ENCODE measurements at regions of chr4 and their contacts with region 1.

Region 1: DNA sequence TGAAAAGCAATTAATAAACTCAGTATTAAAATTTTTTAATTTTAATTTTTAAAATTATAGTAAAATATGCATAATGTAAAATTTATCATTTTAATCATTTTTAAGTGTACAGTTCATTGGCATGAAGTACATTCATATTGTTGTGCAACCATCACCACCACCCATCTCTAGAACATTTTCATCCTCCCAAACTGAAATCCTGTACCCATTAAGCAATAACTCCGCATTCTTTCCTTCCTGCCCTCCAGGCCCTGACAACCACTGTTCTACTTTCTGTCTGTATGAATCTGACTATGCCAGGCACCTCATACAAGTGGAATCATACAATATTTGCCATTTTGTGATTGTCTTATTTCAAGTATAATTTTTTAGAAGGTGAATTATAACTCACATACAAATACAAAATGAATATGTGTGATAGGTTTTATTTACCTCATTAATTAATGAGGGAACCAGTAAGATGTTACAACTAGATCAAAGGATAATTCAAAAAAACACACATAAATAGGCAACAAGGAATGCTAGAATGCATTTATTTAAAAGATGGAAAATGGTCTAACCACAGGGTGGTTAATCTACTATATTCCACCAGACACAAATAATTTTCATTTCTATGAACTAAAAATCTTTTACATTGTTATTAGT is 13.1 kb upstream of the AFF1 start:
- DNase-seq: no peak
- ATAC-seq: no peak
- H3K4me3 Mint-ChIP-seq: no peak overlapping the region
- H3K27ac Mint-ChIP-seq: no peak overlapping the region
- H3K4me1 Mint-ChIP-seq: peaks cover 5% of the 10 kb centered on the region
- H3K27me3 Mint-ChIP-seq: no peaks in the 10 kb centered on the region

Region 2: DNA sequence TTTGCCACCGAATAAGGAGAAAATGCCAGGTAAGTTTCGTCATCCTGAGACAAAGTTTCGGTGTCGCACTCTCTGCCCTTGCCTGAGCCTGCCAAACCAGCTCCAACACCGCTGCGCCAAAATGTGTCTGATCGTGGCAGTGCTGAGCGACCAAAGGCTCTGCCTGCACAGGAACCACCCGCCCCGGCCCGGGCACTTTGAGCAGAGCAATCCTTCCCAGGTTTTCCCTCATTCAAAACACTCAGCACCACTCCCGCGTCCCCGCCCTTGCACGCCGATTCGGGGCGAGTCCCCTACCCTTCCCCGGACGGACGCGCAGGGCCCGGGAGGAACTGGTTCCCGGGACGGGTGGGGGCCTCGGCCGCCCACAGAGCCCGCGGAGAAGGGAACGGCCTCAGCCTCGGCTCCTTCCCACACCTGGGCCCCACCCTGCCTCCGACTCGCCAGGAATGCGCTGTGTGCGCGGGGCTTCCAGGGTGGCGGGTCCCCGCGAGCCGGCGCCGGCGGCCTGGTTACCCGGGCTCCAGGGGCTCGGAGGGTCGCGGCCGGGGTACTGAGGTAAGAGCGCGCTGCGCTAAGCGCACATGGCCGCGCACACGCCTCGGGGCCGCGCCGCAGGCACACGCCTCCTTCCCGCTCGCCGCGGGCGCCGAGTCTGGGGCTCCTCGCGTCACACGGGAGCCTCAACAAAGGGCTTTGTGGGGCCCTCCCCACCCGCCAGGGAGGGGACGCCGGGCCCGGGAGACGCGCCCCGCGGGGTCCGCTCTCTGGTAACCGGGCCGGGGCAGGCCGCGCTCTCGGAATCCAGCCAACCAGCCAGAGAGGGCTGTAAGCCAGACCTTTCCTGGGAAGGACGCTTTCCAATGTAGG is 29.7 kb before region 1 on chr4 and contains the start of gene C4orf36:
- CTCF ChIA-PET with region 1: no interaction called
- POLR2A ChIA-PET with region 1: no interaction called
- DNase-seq: peak; percentile 38
- ATAC-seq: peak; percentile 76
- H3K4me3 Mint-ChIP-seq: peak within 1 kb of the TSS; percentile 72
- H3K27ac Mint-ChIP-seq: no peak within 1 kb of the TSS
- H3K4me1 Mint-ChIP-seq: peaks cover 3% of the 10 kb centered on the region
- H3K27me3 Mint-ChIP-seq: peaks cover 21% of the 10 kb centered on the region
- total RNA-seq, gene C4orf36: 0.37 TPM in 1 of 2 experiments, not detected in the other

Region 3: DNA sequence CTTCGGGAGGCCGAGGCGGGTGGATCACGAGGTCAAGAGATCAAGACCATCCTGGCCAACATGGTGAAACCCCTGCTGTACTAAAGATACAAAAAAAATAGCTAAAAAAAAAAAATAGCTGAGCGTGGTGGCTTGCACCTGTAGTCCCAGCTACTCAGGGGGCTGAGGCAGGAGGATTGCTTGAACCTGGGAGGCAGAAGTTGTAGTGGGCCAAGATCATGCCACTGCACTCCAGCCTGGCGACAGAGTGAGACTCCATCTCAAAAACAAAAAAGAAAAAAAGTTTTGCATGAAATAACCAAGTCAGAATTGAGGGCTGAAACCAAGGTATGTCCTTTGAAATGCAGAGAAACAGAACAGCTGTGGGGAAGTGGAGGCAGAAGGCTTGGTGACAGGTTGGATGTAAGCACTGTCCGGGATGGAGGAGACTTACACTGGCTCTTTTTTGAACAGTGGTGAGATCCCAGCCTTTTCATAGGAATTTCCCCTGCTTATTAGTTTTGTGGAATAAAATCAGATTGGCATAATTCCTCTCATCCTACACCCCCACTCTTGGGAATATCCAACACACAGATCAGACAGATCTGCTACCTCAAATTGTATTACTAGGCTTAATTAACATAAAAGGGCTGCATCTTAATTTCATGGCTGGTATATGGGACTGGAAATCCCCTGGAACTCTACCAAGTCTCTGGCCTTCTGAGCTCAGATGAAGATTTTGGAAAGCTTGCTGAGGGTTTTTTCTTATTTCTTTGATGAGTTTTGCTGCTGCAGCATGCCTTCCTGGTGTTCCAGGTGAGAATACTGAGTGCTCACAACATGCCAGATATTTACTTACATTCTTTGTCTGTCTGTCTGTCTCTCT is 10.7 kb before region 1 on chr4:
- CTCF ChIA-PET with region 1: interaction called, 15 read pairs
- POLR2A ChIA-PET with region 1: no interaction called
- DNase-seq: no peak
- ATAC-seq: no peak
- H3K4me3 Mint-ChIP-seq: no peak overlapping the region
- H3K27ac Mint-ChIP-seq: no peak overlapping the region
- H3K4me1 Mint-ChIP-seq: peaks cover 13% of the 10 kb centered on the region
- H3K27me3 Mint-ChIP-seq: no peaks in the 10 kb centered on the region

Region 4: GRCh38 chr4:86934771-86935565 is 13.2 kb after region 1 on chr4 and contains the start of gene AFF1:
- CTCF ChIA-PET with region 1: interaction called, 53 read pairs
- POLR2A ChIA-PET with region 1: interaction called, 5 read pairs
- DNase-seq: peak; percentile 92
- ATAC-seq: peak; percentile 76
- H3K4me3 Mint-ChIP-seq: peak within 1 kb of the TSS; percentile 88
- H3K27ac Mint-ChIP-seq: peak within 1 kb of the TSS; percentile 92
- H3K4me1 Mint-ChIP-seq: peaks cover 47% of the 10 kb centered on the region
- H3K27me3 Mint-ChIP-seq: no peaks in the 10 kb centered on the region
- total RNA-seq, gene AFF1: 47.8 to 51.6 TPM

Region 5: DNA sequence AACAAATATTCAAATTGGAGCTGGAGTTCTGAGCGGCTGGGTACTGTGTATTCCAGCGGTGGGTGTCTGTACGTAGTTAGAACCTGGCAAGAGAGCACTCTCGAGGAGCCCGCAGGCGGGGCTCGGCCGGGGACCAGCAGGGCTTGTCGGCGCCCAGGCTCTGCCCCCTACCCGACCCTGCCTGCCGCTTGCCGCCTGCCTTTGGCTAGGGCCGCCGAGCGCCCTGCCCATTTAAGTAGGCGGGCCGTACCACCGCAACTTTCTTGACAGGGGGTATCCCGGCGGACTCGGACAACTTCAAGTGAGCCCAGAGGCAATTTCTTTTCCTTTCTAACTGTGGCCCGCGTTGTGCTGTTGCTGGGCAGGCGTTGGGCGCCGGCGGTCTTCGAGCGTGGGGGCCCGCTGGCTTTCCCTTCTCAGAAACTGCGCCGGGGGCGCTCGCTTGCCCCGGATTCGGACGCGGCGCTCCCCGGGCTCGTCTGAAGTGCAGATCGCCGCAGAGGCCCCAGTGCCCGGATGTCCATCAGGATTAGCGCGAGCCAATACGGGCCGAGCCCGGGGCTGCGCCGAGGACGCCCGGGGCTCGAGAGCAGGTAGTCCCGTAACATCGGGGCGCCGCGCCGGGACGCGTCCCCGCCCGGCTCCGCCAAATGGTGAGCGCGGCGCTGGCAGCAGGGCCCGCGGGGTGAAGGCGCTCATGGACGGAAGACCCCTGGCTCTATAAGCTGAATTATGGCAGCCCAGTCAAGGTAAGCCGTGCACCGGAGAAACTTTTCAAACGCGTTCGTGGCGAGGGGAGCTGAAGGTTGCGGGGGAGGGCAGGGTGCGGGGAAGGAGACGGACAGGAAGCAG is 85.2 kb after region 1 on chr4:
- CTCF ChIA-PET with region 1: interaction called, 35 read pairs
- POLR2A ChIA-PET with region 1: interaction called, 11 read pairs
- DNase-seq: peak; percentile 92
- ATAC-seq: peak; percentile 87
- H3K4me3 Mint-ChIP-seq: peak overlapping the region; percentile 98
- H3K27ac Mint-ChIP-seq: peak overlapping the region; percentile 98
- H3K4me1 Mint-ChIP-seq: peaks cover 50% of the 10 kb centered on the region
- H3K27me3 Mint-ChIP-seq: no peaks in the 10 kb centered on the region

Region 6: GRCh38 chr4:87053802-87054767 is 132.4 kb after region 1 on chr4:
- CTCF ChIA-PET with region 1: interaction called, 10 read pairs
- POLR2A ChIA-PET with region 1: no interaction called
- DNase-seq: no peak
- ATAC-seq: no peak
- H3K4me3 Mint-ChIP-seq: no peak overlapping the region
- H3K27ac Mint-ChIP-seq: no peak overlapping the region
- H3K4me1 Mint-ChIP-seq: peaks cover 40% of the 10 kb centered on the region
- H3K27me3 Mint-ChIP-seq: no peaks in the 10 kb centered on the region

Region 7: GRCh38 chr4:87078987-87079486 is 157.3 kb after region 1 on chr4:
- CTCF ChIA-PET with region 1: interaction called, 11 read pairs
- POLR2A ChIA-PET with region 1: no interaction called
- DNase-seq: no peak
- ATAC-seq: no peak
- H3K4me3 Mint-ChIP-seq: no peak overlapping the region
- H3K27ac Mint-ChIP-seq: no peak overlapping the region
- H3K4me1 Mint-ChIP-seq: peaks cover 22% of the 10 kb centered on the region
- H3K27me3 Mint-ChIP-seq: no peaks in the 10 kb centered on the region

Region 8: GRCh38 chr4:87220094-87220822 is 298.5 kb after region 1 on chr4 and contains the start of gene KLHL8:
- CTCF ChIA-PET with region 1: interaction called, 14 read pairs
- POLR2A ChIA-PET with region 1: no interaction called
- DNase-seq: peak; percentile 88
- ATAC-seq: peak; percentile 93
- H3K4me3 Mint-ChIP-seq: peak within 1 kb of the TSS; percentile 94
- H3K27ac Mint-ChIP-seq: peak within 1 kb of the TSS; percentile 95
- H3K4me1 Mint-ChIP-seq: peaks cover 14% of the 10 kb centered on the region
- H3K27me3 Mint-ChIP-seq: peaks cover 9% of the 10 kb centered on the region
- total RNA-seq, gene KLHL8: 13.4 to 15.8 TPM

Measured in activated CD8-positive, alpha-beta T cell treated with anti-CD3 and anti-CD28 coated beads, Interleukin-2, amount 10 ng/mL, durations not matched to agents 7 days and 5 days (primary cell).